SK-N-SH (cell line): ENCODE measurements at regions of chr12 and their contacts with region 1.

Region 1: GRCh38 chr12:51217968-51218606 is at the start of gene POU6F1:
- DNase-seq: peak; percentile 96
- H3K4me3 ChIP-seq: peak within 1 kb of the TSS; percentile 58 to 65
- H3K27ac ChIP-seq: peak within 1 kb of the TSS; percentile 53 to 77
- H3K4me1 ChIP-seq: peaks cover 0 to 8% of the 10 kb centered on the region in 2 experiments; a peak in 1 of 4 replicates
- H3K27me3 ChIP-seq: no peaks in the 10 kb centered on the region
- CTCF ChIP-seq: peak; percentile 53
- EP300 ChIP-seq: no peak
- RAD21 ChIP-seq: no peak
- polyA plus RNA-seq, gene POU6F1: 1.9 TPM in 2 replicates

Region 2: GRCh38 chr12:51083126-51083833 is 134.8 kb before region 1 on chr12 and contains the start of gene CSRNP2:
- CTCF ChIA-PET with region 1: no interaction called
- POLR2A ChIA-PET with region 1: interaction called, 10 read pairs
- DNase-seq: peak; percentile 99
- H3K4me3 ChIP-seq: peak within 1 kb of the TSS; percentile 83 to 97
- H3K27ac ChIP-seq: peak within 1 kb of the TSS; percentile 86 to 90
- H3K4me1 ChIP-seq: peaks cover 6 to 7% of the 10 kb centered on the region in 2 experiments; a peak in 3 of 4 replicates
- H3K27me3 ChIP-seq: no peaks in the 10 kb centered on the region
- CTCF ChIP-seq: no peak
- EP300 ChIP-seq: peak in 1 of 2 experiments; percentile 10; a peak in 1 of 4 replicates
- RAD21 ChIP-seq: no peak
- polyA plus RNA-seq, gene CSRNP2: 18.7 and 22.7 TPM in 2 replicates

Region 3: GRCh38 chr12:51238510-51239334 is 20.6 kb after region 1 on chr12 and contains the start of gene DAZAP2:
- CTCF ChIA-PET with region 1: interaction called, 15 read pairs
- POLR2A ChIA-PET with region 1: interaction called, 13 read pairs
- DNase-seq: peak; percentile 96
- H3K4me3 ChIP-seq: peak within 1 kb of the TSS; percentile 90 to 95
- H3K27ac ChIP-seq: peak within 1 kb of the TSS; percentile 96 to 98
- H3K4me1 ChIP-seq: peaks cover 3 to 11% of the 10 kb centered on the region in 2 experiments; a peak in 2 of 4 replicates
- H3K27me3 ChIP-seq: no peaks in the 10 kb centered on the region
- CTCF ChIP-seq: no peak
- EP300 ChIP-seq: no peak
- RAD21 ChIP-seq: no peak
- polyA plus RNA-seq, gene DAZAP2: 274 and 325 TPM in 2 replicates